AG04449 (cell line): ENCODE measurements at regions of chr13 and their contacts with region 1.

Region 1: DNA sequence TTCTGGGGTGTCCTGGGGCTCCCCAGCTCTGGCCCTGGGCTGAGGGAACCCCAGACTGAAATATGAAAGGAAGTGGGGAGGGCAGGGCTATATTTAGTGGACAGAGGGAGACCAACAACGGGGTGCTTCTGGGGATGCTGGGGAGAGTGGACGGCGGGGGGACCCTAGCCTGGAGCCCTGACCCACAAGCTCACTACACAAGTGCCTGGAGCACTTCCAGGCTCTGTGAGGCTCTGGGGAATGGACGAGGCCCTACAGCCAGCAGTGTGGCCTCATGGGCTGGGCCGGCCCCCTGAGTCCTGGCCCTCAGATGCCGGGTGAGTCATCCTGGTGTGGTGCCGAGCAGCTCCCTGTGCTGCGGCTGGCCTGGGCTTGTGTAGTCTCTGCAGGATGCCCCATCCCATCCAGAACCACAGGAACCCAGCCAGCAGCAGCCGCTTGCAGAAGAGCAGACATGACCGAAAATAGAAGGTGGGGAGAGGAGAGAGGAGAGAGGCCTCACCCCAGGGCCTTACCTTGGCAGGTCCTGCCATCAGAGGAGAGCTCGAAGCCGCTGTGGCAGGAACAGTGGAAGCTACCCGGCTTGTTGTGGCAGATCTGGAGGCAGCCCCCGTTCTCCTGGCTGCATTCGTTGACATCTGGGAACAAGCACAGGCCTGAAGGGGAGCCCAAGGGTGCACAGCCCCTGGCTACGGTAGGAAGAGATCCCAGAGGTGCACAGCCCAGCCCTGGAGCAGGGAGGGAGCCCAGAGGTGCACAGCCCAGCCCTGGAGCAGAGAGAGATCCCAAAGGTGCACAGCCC is 26.1 kb downstream of the GAS6 start:
- DNase-seq: peak; percentile 90
- H3K4me3 ChIP-seq: peak overlapping the region; percentile 59
- CTCF ChIP-seq: no peak

Region 2: GRCh38 chr13:113672002-113672651 is 165.6 kb before region 1 on chr13:
- CTCF ChIA-PET with region 1: no interaction called
- POLR2A ChIA-PET with region 1: no interaction called
- DNase-seq: no peak
- H3K4me3 ChIP-seq: no peak overlapping the region
- CTCF ChIP-seq: no peak

Region 3: GRCh38 chr13:113827021-113827420 is 10.7 kb before region 1 on chr13:
- CTCF ChIA-PET with region 1: no interaction called
- POLR2A ChIA-PET with region 1: no interaction called
- DNase-seq: no peak
- H3K4me3 ChIP-seq: no peak overlapping the region
- CTCF ChIP-seq: no peak

Region 4: DNA sequence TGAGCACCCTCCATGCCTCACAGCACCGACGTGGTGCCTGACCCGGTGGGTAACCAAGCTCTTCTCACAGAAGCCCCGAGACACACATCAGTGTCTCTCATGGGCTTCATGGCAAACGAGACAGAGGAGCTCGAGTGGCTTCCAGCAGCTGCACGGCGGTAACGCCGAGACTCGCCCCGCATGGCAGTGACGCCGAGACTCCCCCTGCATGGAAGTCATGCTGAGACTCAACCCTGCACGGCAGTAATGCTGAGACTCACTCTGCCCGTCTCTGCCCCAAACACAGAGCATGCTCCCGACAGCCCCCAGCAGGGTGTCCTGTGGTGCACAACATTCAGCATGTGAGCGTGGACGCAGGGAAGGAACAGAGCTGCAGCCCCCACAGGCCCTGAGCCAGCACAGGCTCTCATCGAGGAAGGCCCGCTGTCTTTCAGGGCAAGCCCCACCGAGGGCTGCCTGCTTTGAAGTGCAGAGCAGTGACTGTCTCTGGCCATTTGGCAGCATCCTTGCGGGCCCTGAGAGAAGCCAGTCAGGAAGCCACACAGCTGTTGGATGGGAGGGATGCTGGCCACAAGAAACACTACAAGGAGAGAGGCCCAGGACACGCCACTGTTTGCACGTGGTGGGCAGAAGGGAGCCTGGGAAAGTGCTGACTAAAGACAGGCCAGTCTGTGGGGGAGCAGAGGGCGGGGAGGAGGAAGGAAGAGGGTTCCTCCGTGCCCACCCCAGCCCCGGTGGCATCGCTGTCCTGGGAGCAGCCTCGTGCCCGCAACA is 16.7 kb after region 1 on chr13:
- CTCF ChIA-PET with region 1: interaction called, 6 read pairs
- POLR2A ChIA-PET with region 1: interaction called, 12 read pairs
- DNase-seq: no peak
- H3K4me3 ChIP-seq: no peak overlapping the region; the same call in 1 of the 2 replicates
- CTCF ChIP-seq: no peak